Activated naive CD8-positive, alpha-beta T cell treated with anti-CD3 and anti-CD28 coated beads, Interleukin-2, amount 10 ng/mL, durations not matched to agents 7 days and 5 days (primary cell): ENCODE measurements at regions of chr1 and their contacts with region 1.

Region 1: GRCh38 chr1:92485381-92486257 is 1.1 kb downstream of the GFI1 start:
- DNase-seq: peak; percentile 93
- ATAC-seq: peak; percentile 68
- H3K4me3 Mint-ChIP-seq: peak overlapping the region; percentile 99
- H3K27ac Mint-ChIP-seq: peak overlapping the region; percentile 98
- H3K4me1 Mint-ChIP-seq: peaks cover 26% of the 10 kb centered on the region
- H3K27me3 Mint-ChIP-seq: no peaks in the 10 kb centered on the region

Region 2: DNA sequence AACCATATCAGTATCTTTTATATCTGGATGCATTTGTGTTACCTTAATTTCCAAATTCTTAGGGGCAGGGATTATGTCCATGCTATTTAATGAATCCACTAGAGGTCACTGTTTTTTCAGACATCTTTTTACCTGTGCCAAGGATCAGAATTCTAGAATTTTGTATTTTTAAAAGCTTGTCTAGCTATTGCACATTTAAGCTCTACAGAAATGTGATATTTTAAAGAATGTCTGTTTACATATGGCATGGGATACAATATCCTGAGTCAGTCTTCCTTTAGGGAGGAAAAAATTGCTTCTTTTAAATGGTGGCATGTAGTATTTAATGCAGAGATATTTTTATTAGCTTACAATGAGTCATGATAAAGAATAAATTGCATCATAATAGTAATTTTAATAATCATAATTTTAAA is 175.4 kb before region 1 on chr1:
- POLR2A ChIA-PET with region 1: interaction called, 193 read pairs
- DNase-seq: no peak
- ATAC-seq: peak; percentile 53
- H3K4me3 Mint-ChIP-seq: no peak overlapping the region
- H3K27ac Mint-ChIP-seq: no peak overlapping the region
- H3K4me1 Mint-ChIP-seq: peaks cover 25% of the 10 kb centered on the region
- H3K27me3 Mint-ChIP-seq: no peaks in the 10 kb centered on the region

Region 3: DNA sequence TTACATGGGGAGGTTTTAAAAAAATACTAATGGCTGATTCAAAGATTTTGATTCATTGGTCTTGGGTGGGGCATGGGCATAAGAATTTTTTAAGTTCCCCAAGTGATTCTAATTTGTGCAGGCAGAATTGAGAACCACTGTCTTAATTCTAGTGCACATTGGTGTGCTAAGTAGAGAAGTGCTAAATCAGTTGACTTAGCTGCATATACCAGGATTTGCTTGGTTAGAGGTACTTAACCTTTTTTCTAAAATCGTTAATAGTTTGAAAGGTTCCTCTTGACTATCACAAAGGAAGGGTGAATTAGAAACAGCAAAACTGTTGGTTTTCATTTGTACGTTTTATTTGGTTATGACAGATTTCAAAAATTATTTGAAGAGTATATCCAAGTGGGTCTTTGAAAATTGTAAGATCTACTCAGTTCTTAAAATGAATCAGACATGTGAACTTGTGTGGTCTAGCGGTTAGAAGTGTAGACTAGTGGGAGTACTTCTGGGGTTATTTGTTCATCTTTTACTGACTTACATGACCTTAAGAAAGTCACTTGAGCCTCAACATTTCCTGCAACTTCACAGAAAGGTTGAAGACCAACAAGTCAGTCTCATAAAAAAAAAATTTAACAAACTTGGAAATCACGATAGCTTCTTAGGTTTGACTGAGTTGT is 120.1 kb before region 1 on chr1:
- POLR2A ChIA-PET with region 1: interaction called, 12 read pairs
- DNase-seq: no peak
- ATAC-seq: peak; percentile 75
- H3K4me3 Mint-ChIP-seq: peak overlapping the region; percentile 48
- H3K27ac Mint-ChIP-seq: peak overlapping the region; percentile 72
- H3K4me1 Mint-ChIP-seq: peaks cover 48% of the 10 kb centered on the region
- H3K27me3 Mint-ChIP-seq: no peaks in the 10 kb centered on the region

Region 4: GRCh38 chr1:92461364-92462097 is 24.1 kb before region 1 on chr1:
- POLR2A ChIA-PET with region 1: interaction called, 20 read pairs
- DNase-seq: no peak
- ATAC-seq: no peak
- H3K4me3 Mint-ChIP-seq: peak overlapping the region; percentile 20
- H3K27ac Mint-ChIP-seq: peak overlapping the region; percentile 18
- H3K4me1 Mint-ChIP-seq: peaks cover 55% of the 10 kb centered on the region
- H3K27me3 Mint-ChIP-seq: no peaks in the 10 kb centered on the region

Region 5: DNA sequence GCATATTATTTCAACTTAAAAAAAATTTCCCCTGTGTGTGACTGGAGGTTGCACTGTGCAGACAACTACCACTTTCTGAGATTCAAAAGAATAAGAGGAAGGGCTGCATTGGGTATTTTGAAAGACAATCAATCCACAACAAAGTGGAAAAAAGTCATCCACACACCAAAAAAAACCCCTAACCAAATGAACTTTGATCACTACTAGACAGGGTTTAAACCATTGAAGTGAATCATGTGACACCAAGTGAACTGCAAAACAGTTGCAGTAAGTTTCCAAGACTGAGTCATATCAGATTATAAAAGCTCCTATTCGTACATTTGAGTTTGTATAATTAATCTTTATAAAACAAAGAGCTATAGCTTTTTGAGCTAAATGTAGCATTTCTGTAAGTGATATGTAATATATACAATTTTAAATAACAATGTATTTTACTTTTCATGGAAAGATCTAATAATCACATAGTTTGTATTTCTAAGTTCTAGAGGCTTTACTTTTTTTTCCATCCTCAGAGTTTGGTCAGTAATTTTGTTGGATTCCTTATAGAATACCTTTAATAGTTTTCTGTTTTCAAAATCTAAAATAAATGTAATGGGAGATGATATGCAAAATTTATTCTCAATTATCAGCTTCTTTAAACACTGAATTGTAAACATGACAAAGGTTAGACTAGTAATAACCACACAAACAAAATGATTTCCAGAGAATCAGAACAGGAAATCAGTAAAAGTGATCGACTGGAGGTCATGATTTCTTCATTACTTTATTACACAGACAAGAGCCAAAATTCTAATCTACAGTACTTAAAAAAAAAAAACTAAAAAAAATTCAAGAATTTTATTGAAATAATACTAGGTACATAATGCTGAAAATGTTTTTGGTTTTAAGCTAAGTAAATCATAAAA is 51.6 kb after region 1 on chr1:
- POLR2A ChIA-PET with region 1: interaction called, 209 read pairs
- DNase-seq: no peak
- ATAC-seq: peak; percentile 76
- H3K4me3 Mint-ChIP-seq: peak overlapping the region; percentile 78
- H3K27ac Mint-ChIP-seq: peak overlapping the region; percentile 93
- H3K4me1 Mint-ChIP-seq: peaks cover 44% of the 10 kb centered on the region
- H3K27me3 Mint-ChIP-seq: no peaks in the 10 kb centered on the region

Region 6: DNA sequence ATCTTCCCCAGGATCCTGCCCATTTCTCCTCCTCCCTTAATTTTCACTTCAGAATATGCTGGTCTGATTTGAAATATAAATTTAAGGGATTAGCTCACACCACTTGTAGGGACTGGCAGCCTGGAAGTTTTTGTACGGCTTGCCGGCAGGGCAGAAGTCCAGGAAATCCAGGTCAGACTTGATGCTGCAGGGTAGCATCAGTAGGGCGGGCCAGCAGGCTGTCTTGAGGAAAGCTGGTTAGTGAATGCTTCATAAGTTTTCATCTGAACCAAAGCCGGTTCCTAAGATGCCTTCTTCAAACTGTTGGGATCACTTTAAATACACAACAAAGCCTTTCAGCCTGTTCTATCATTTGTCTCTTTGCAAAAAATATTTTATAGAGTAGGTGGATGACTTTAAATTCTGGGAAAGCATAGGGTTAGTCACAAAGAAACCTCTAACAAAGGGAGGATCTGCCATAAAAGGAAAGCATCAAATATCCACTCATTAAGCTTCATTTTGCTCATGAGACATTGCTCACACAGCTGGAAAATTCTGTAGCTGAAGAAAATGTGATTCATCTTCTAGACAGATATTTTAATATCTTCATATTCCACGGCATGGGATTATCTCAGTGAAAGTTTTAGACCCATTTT is 91.8 kb after region 1 on chr1:
- POLR2A ChIA-PET with region 1: interaction called, 15 read pairs
- DNase-seq: no peak
- ATAC-seq: no peak
- H3K4me3 Mint-ChIP-seq: peak overlapping the region; percentile 65
- H3K27ac Mint-ChIP-seq: peak overlapping the region; percentile 67
- H3K4me1 Mint-ChIP-seq: peaks cover 49% of the 10 kb centered on the region
- H3K27me3 Mint-ChIP-seq: no peaks in the 10 kb centered on the region

Region 7: DNA sequence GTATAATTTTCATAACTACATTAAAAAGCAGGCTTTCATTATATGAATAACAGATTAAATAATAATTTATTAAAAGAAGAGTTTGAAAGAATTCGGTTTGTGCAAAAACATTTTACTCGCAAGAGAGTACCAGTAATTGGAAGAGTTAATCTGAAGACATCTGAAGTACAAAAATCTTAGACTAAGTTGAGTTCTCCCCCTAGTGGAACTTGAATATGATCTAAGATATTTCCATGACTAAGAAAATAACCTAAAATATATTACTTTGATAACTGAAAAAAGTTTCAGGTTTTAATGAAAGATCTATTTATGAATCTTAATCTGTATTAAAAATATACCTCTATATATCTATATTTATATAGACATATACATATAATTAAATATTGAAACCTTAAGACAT is 113.6 kb after region 1 on chr1:
- POLR2A ChIA-PET with region 1: interaction called, 28 read pairs
- DNase-seq: no peak
- ATAC-seq: peak; percentile 50
- H3K4me3 Mint-ChIP-seq: no peak overlapping the region
- H3K27ac Mint-ChIP-seq: no peak overlapping the region
- H3K4me1 Mint-ChIP-seq: peaks cover 22% of the 10 kb centered on the region
- H3K27me3 Mint-ChIP-seq: no peaks in the 10 kb centered on the region

Region 8: GRCh38 chr1:92701147-92701546 is 215.5 kb after region 1 on chr1:
- POLR2A ChIA-PET with region 1: no interaction called
- DNase-seq: no peak
- ATAC-seq: no peak
- H3K4me3 Mint-ChIP-seq: no peak overlapping the region
- H3K27ac Mint-ChIP-seq: no peak overlapping the region
- H3K4me1 Mint-ChIP-seq: peaks cover 5% of the 10 kb centered on the region
- H3K27me3 Mint-ChIP-seq: peaks cover 30% of the 10 kb centered on the region